B cell (primary cell): ENCODE measurements at regions of chrX and their contacts with region 1.

Region 1: DNA sequence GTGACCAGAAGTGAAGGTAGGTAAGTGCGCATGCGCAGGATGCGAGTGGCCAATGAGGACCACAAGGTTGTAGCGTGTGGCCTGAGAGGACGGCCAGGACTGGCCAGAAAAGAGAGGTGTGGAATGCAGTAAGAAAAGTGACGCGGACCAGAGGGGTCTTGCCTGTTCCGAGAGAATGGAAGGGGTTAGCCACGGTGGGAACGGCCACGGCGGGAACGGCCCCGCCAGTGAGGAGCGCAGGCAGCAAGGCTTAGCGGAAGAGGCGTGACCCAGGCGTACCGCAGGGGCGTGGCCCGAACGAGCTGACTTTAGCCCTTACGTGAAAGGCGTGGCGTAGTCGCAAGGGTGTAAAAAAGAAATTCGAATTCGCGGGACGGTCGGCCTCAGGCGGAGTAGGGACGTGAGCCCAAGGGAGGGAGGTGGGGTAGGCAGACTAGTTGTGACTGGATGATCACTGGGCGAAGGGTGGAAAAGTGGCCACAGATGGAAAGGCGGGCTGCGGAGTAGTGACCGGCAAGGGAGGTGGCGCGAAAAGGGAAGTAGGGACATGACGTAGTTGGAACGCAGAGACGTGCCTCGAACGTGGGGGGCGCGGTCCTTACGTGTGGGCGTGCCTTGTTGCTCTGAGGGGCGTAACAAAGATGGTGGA is 10.4 kb upstream of the CLTRN start:
- DNase-seq: peak; percentile 96
- ATAC-seq: peak; percentile 81
- H3K4me3 ChIP-seq: peak overlapping the region; percentile 67 to 99 (median 80)
- H3K4me3 Mint-ChIP-seq: no peak overlapping the region
- H3K27ac ChIP-seq: peak overlapping the region; percentile 98 to 100
- H3K27ac Mint-ChIP-seq: no peak overlapping the region
- H3K4me1 ChIP-seq: peaks cover 16 to 17% of the 10 kb centered on the region in 2 donors
- H3K4me1 Mint-ChIP-seq: peaks cover 15% of the 10 kb centered on the region
- H3K27me3 ChIP-seq: no peaks in the 10 kb centered on the region
- H3K27me3 Mint-ChIP-seq: no peaks in the 10 kb centered on the region
- CTCF ChIP-seq: no peak

Region 2: DNA sequence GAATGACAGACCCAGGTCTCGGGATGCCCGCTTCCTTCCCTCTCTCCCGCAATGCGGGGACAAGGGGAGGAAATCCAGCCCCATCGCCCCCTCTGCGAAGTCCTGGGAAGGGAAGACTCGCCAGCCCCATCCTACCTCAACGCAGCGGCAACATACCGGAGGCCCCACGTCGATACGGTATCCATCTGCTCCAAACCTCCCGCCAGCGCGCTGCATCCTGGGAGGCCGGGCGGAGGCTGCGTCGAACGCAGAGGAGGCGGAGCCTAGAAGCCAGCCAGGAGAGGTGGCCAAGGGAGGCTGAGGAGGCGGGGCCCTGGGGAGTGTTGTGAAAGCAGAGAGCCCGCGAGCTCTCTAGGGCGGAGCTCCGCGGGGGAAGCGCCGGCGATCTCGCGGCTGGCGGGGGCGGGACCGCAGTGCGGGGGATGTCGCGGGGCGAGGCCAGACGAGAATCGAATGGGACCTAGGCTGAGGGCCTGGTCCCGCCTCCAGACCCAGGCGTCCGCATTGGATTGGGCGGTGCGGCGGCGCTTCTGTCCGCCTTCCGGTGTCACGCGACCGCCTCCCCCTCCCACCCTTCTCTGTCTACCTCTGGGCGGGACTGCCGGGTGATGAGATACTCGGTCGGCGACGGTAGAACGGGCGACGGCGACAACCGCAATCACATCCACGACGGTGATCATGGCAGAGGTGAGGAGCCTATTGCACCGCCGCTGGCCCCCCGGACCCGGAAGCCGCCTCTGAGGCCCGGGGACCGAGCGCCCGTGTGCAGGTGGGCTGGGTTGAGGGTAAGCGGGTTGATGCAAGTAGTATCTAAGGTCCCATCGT is 801.9 kb before region 1 on chrX and contains the starts of genes FANCB and MOSPD2:
- CTCF ChIA-PET with region 1: no interaction called
- POLR2A ChIA-PET with region 1: no interaction called
- intact Hi-C with region 1: loop called (anchors 2 kb)
- DNase-seq: peak; percentile 94
- ATAC-seq: peak; percentile 91
- H3K4me3 ChIP-seq: peak within 1 kb of the TSS; percentile 69 to 89 (median 75)
- H3K4me3 Mint-ChIP-seq: peak within 1 kb of the TSS; percentile 92
- H3K27ac ChIP-seq: peak within 1 kb of the TSS; percentile 80 to 85
- H3K27ac Mint-ChIP-seq: peak within 1 kb of the TSS; percentile 93
- H3K4me1 ChIP-seq: peaks cover 7 to 11% of the 10 kb centered on the region in 2 donors
- H3K4me1 Mint-ChIP-seq: peaks cover 13% of the 10 kb centered on the region
- H3K27me3 ChIP-seq: no peaks in the 10 kb centered on the region
- H3K27me3 Mint-ChIP-seq: no peaks in the 10 kb centered on the region
- CTCF ChIP-seq: no peak
- total RNA-seq, gene FANCB: 3.9 and 7.6 TPM in 2 replicates
- total RNA-seq, gene MOSPD2: 23.1 and 27.0 TPM in 2 replicates

Region 3: DNA sequence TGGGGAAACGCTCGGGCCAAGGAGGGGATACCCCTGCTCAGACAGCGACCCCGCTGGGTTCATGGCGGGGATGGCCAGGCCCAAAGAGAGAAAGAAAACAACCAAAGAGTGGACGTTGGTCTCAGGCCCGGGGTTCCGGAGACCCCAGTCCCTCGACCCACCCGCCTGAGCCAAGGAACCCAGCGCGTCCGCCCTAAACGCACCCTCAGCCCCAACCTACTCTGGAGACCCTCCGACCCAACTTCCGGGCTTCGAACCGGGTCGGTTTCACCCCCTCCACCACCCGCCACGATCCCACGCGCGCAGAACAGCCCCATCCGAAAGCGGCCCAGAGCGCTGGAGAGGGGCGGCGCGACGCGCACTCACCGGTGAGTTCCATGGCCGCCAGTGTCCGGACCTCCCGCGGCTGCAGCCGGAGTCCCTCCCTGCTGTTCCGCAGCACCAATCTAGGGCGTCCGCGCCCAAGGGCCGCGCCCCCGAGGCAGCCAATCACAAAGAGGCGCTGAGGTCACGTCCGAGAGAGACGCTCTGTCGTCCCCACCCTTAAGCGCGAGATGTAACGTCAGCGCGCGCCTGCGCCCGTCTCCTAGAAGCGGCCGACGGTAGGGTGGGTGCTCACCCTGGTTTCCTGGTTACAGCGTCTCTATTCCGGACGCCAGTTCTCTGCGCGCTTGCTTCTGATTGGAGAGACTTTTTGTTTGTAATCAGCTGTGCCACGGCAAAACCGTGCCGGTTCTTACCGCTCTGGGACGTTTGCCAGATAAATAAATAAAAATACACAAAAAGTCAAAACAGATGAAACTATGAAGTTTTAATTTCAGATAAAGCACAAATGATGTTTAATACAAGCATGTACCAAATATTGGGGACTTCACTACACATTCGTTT is 339.6 kb before region 1 on chrX and contains the start of gene PIGA:
- CTCF ChIA-PET with region 1: no interaction called
- POLR2A ChIA-PET with region 1: no interaction called
- intact Hi-C with region 1: loop called (anchors 2 kb)
- DNase-seq: peak; percentile 94
- ATAC-seq: peak; percentile 91
- H3K4me3 ChIP-seq: peak within 1 kb of the TSS; percentile 65 to 93 (median 74)
- H3K4me3 Mint-ChIP-seq: peak within 1 kb of the TSS; percentile 92
- H3K27ac ChIP-seq: peak within 1 kb of the TSS; percentile 84 to 95
- H3K27ac Mint-ChIP-seq: peak within 1 kb of the TSS; percentile 94
- H3K4me1 ChIP-seq: peaks cover 4 to 15% of the 10 kb centered on the region in 2 donors
- H3K4me1 Mint-ChIP-seq: peaks cover 20% of the 10 kb centered on the region
- H3K27me3 ChIP-seq: peaks cover 0 to 15% (median 1%) of the 10 kb centered on the region in 4 experiments
- H3K27me3 Mint-ChIP-seq: peaks cover 8% of the 10 kb centered on the region
- CTCF ChIP-seq: no peak
- total RNA-seq, gene PIGA: 25.7 and 26.0 TPM in 2 replicates